ENCODE measurements at regions of chr2 and their contacts with region 1.

Region 1: DNA sequence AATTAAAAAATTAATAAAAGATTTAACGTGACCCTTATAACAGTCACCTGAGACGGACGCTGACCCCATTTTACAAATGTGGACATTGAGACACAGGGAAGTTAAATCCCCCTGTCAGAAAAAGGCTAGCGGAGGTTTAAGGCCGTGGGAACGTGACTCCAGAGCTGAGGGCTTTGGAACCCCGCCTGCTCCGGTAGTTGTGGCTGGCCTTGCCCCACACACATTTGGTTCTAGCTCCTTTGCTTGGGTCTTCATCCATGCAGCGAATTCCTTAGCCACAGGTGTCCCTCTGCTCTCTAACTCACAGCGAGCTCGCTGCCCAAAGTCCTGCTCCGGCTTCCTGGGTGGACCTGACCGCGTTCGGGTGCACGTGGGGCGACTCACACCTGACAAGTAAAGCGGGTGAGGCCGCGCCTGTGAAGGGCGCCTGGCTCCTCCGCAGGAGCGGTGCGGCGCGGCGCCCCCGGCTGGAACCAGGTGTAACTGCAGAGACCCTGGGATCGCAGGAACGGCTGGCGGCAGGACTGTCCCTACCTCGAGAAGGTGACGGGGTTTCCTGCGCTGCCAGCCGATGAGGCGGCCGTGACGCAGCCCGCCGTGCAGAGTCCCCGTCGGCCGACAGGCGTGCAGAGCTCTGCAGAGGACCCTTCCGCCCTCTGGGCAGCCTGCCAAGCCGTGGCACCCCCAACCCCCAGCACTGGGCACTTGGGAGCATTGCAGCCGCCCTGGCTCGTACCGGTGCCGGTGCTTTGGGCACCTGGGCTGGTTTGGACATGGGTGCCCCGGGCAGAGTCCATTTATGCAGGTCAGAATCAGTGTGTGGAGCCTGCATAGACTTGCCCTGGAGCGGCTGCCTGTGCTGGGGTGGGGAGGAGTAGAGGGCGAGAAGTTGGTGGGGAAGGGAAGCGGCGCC is 2.4 kb upstream of the PROC start:
- DNase-seq: peak; percentile 66 to 84 (median 80)
- ATAC-seq: peak; percentile 94
- H3K4me3 ChIP-seq: peak overlapping the region; percentile 67
- H3K4me3 Mint-ChIP-seq: peak overlapping the region; percentile 76 to 91 (median 84)
- H3K27ac ChIP-seq: peak overlapping the region; percentile 61
- H3K27ac Mint-ChIP-seq: peak overlapping the region in 7 of 9 donors; percentile 21 to 82 (median 42)
- H3K4me1 ChIP-seq: peaks cover 0 to 7% of the 10 kb centered on the region in 2 donors
- H3K4me1 Mint-ChIP-seq: peaks cover 14 to 34% (median 19%) of the 10 kb centered on the region in 7 donors
- H3K27me3 ChIP-seq: no peaks in the 10 kb centered on the region
- H3K27me3 Mint-ChIP-seq: peaks cover 5 to 35% (median 10%) of the 10 kb centered on the region in 5 donors

Region 2: DNA sequence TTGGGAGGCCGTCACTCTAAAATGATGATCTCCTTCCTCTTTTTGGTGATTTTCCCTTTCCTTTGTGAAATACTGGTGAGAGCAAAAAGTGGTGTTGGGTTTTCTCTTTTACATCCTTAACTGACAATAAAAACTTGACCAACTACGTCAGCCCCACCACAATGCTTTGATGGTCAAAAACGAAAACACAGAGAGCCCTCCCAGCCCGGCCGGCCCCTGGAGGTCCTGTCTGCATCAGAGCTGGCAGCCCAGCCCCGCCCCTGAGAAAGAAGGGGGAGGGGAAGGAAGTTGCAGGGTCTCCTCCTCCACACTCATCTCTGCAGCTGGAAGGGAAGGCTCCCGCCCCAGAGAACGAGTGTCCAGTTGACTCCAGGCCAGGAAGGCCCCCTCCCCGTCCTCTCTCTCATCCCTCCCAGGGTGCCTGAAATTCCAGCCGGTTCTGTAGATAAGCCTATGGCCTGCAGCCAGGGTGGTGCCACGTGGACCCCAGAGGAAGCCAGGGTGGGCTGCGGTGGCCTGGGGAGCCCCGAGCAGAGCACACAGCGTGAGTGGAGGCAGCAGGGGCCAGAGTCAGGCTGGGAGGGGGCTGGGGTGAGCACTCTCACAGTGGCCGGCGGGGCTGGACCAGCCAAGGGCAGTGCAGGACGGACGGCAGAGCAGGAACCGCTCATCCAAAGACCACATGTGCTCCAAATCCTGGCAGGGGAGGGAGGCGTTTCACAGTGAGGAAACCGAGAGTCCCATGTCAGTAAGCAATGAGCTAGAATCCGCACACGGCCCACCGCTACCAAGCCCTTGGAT is 328.7 kb before region 1 on chr2:
- CTCF ChIA-PET with region 1: no interaction called
- POLR2A ChIA-PET with region 1: no interaction called
- intact Hi-C with region 1: loop called in 1 of 2 experiments (anchors 10 kb)
- DNase-seq: no peak
- ATAC-seq: peak; percentile 20
- H3K4me3 ChIP-seq: no peak overlapping the region
- H3K4me3 Mint-ChIP-seq: peak overlapping the region in 4 of 10 donors; percentile 10 to 34 (median 26)
- H3K27ac ChIP-seq: no peak overlapping the region
- H3K27ac Mint-ChIP-seq: peak overlapping the region in 8 of 9 donors; percentile 20 to 99 (median 62)
- H3K4me1 ChIP-seq: peaks cover 40 to 41% of the 10 kb centered on the region in 2 donors
- H3K4me1 Mint-ChIP-seq: peaks cover 34 to 56% (median 43%) of the 10 kb centered on the region in 7 donors
- H3K27me3 ChIP-seq: no peaks in the 10 kb centered on the region
- H3K27me3 Mint-ChIP-seq: peaks cover 0 to 9% (median 0%) of the 10 kb centered on the region in 5 donors

Region 3: GRCh38 chr2:127197475-127198385 is 218.1 kb before region 1 on chr2:
- CTCF ChIA-PET with region 1: no interaction called
- POLR2A ChIA-PET with region 1: no interaction called
- intact Hi-C with region 1: loop called in 1 of 2 experiments (anchors 5 kb)
- DNase-seq: peak; percentile 15 to 46 (median 32)
- ATAC-seq: peak; percentile 89
- H3K4me3 ChIP-seq: no peak overlapping the region
- H3K4me3 Mint-ChIP-seq: peak overlapping the region; percentile 66 to 85 (median 77)
- H3K27ac ChIP-seq: no peak overlapping the region
- H3K27ac Mint-ChIP-seq: peak overlapping the region in 2 of 9 donors; percentile 10 to 39
- H3K4me1 ChIP-seq: no peaks in the 10 kb centered on the region
- H3K4me1 Mint-ChIP-seq: peaks cover 0 to 5% (median 0%) of the 10 kb centered on the region in 7 donors
- H3K27me3 ChIP-seq: no peaks in the 10 kb centered on the region
- H3K27me3 Mint-ChIP-seq: peaks cover 0 to 4% (median 0%) of the 10 kb centered on the region in 5 donors

Region 4: DNA sequence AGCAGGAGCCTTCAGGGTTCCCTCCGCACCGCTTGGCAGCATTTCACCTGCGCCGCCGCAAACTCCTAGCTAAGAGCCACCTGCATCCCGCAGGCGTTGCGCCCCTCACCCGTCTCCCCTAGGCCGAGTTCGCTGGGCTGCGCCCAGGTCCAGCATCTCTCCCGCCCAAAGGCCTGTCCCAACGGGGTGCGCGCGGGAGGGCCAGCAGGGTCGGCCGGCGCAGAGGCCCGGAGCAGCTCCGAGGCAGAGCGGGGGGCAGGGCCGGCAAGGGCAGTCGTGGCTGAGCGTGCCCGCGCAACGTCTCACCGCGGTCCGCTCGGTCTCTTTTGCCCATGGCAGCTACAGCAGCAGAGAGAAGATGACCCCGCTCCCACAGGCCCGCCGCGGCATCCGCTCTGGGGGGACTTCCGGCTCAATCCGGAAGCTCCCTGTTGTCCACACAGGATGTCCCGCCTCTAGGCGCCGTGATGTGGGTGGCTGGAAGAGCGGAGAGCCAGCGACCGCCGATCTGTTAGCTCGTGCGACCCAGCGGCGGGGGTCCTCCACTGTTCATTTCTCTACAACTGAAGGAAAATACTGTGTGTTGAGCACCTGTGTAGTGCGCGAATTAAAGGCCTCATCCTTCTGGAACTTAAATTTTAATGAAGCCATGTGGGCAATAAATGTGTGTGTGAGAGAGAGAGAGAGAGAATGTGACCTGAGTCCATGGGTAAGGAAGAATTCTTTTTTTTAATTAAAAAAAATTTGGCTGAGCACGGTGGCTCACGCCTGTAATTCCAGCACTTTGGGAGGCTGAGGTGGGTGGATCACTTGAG is 121.9 kb before region 1 on chr2 and contains the start of gene ERCC3:
- CTCF ChIA-PET with region 1: no interaction called
- POLR2A ChIA-PET with region 1: interaction called, 6 read pairs
- intact Hi-C with region 1: loop called (anchors 2 to 5 kb)
- DNase-seq: peak; percentile 54 to 81 (median 72)
- ATAC-seq: peak; percentile 93
- H3K4me3 ChIP-seq: peak within 1 kb of the TSS; percentile 87
- H3K4me3 Mint-ChIP-seq: peak within 1 kb of the TSS; percentile 92 to 99 (median 98)
- H3K27ac ChIP-seq: peak within 1 kb of the TSS; percentile 86
- H3K27ac Mint-ChIP-seq: peak within 1 kb of the TSS; percentile 77 to 97 (median 95)
- H3K4me1 ChIP-seq: peaks cover 8 to 12% of the 10 kb centered on the region in 2 donors
- H3K4me1 Mint-ChIP-seq: peaks cover 18 to 49% (median 37%) of the 10 kb centered on the region in 7 donors
- H3K27me3 ChIP-seq: no peaks in the 10 kb centered on the region
- H3K27me3 Mint-ChIP-seq: no peaks in the 10 kb centered on the region
- total RNA-seq, gene ERCC3: 43.4 to 71.5 (median 56.8) TPM

Region 5: DNA sequence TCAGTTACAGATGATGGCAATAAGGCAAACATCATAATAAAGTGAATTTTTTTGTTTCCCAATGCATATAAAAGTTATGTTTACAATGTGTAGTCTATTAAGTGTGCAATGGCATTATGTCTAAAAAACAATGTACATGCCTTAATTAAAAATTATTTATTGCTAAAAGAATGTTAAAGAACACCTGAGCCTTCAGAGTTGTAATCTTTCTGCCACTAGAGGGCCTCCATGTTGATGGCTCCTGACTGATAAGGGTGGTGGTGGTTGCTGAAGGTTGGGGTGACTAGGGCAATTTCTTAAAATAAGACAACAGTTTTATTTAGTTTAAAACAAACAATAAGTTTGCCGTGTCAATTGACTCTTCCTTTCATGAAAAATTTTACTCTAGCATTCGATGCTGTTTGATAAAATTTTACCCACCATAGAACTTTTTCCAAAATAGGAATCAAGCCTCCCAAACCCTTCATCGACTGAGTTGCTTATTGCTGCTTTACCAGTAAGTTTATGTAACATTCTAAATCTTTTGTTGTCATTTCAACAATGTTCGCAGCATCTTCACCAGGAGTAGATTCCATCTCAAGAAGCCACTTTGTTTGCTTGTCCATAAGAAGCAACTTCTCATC is 60.4 kb before region 1 on chr2:
- CTCF ChIA-PET with region 1: interaction called, 3 read pairs
- POLR2A ChIA-PET with region 1: no interaction called
- intact Hi-C with region 1: loop called (anchors 1 kb)
- DNase-seq: peak in 7 of 9 donors; percentile 15 to 60 (median 41)
- ATAC-seq: peak; percentile 82
- H3K4me3 ChIP-seq: no peak overlapping the region
- H3K4me3 Mint-ChIP-seq: no peak overlapping the region
- H3K27ac ChIP-seq: no peak overlapping the region
- H3K27ac Mint-ChIP-seq: peak overlapping the region in 4 of 9 donors; percentile 17 to 83 (median 27)
- H3K4me1 ChIP-seq: peaks cover 0 to 11% of the 10 kb centered on the region in 2 donors
- H3K4me1 Mint-ChIP-seq: peaks cover 25 to 82% (median 70%) of the 10 kb centered on the region in 7 donors
- H3K27me3 ChIP-seq: no peaks in the 10 kb centered on the region
- H3K27me3 Mint-ChIP-seq: no peaks in the 10 kb centered on the region

Region 6: DNA sequence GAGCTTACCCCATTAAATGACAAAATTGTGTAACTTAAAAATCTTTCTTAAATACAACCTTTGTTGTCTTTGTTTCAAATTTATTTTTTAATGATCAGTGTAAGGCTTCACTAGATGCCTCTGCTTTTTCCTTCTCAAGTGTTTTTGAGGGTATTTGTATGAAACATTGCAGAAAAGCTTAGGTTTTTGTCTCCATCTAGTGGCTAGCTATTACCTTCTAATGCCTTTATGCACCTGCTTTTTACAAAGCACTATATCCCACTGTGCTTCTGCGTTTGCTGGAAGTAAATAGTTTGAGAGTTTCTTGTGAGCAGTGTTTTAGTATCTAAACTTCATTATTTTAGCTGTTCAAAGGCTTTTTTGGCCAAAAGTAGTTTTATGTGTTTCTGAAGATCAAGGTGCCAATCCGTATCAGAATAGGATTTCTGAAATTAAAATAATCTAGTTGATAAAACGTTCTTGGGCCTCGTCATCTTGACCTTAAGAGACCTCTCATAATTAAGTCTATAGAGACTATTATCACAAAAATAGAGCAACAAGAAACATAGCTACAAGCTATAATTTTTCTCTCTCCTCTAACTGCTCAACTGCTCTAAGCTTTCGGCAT is 63.5 kb after region 1 on chr2:
- CTCF ChIA-PET with region 1: interaction called, 7 read pairs
- POLR2A ChIA-PET with region 1: no interaction called
- intact Hi-C with region 1: loop called in 1 of 2 experiments (anchors 5 kb)
- DNase-seq: peak in 6 of 9 donors; percentile 15 to 53 (median 32)
- ATAC-seq: peak; percentile 54
- H3K4me3 ChIP-seq: no peak overlapping the region
- H3K4me3 Mint-ChIP-seq: no peak overlapping the region
- H3K27ac ChIP-seq: no peak overlapping the region
- H3K27ac Mint-ChIP-seq: no peak overlapping the region
- H3K4me1 ChIP-seq: no peaks in the 10 kb centered on the region
- H3K4me1 Mint-ChIP-seq: peaks cover 0 to 4% (median 0%) of the 10 kb centered on the region in 7 donors
- H3K27me3 ChIP-seq: no peaks in the 10 kb centered on the region
- H3K27me3 Mint-ChIP-seq: no peaks in the 10 kb centered on the region

Measured in naive thymus-derived CD4-positive, alpha-beta T cell (primary cell).